Mammary epithelial cell (primary cell): ENCODE measurements at regions of chr1 and their contacts with region 1.

Region 1: GRCh38 chr1:234309598-234310459 is 63.4 kb upstream of the COA6 start:
- DNase-seq: peak; percentile 59
- H3K4me3 ChIP-seq: no peak overlapping the region
- H3K27ac ChIP-seq: no peak overlapping the region
- H3K4me1 ChIP-seq: peaks cover 22% of the 10 kb centered on the region
- H3K27me3 ChIP-seq: no peaks in the 10 kb centered on the region
- CTCF ChIP-seq: peak; percentile 90 to 97

Region 2: DNA sequence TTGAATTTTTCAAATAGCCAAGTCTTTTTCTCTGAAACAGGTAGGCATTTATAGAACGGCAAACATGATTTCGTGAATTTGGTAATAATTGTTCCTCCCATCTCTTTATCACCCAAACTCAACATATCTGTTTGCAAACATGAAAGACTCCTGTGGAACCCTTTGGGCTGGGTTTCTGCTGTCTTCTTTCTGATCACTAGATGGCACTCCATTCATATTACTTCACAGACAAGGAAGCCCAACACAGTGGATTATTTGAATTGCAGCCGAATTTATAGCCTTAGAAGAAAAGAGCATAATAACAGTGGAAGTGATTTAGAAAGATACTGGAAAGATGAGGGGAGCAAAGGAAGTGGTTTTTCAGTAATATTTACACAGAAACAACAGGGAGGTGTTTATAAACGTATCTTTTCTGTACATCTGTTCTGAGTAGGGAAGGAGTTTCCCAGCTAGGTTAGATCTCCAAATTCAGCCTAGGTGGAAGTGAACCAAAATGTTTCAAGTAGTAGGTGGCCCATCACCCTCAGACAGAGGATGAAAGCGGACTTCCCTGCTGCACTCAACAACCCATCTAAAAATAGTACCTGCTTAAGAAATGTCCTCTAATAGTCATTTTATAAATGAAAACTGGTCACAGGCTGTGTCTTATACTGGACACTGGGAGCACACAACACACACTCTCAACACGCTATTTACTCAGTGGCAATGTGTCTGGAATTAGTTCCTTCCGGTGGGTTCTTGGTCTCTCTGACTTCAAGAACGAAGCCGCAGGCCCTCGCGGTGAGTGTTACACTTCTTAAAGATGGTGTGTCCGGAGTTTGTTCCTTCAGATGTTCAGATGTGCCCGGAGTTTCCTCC is 914.7 kb before region 1 on chr1:
- CTCF ChIA-PET with region 1: no interaction called
- dilution Hi-C with region 1: no loop called
- in situ Hi-C with region 1: no loop called
- intact Hi-C with region 1: loop called (anchors 2 kb)
- DNase-seq: peak; percentile 43
- H3K4me3 ChIP-seq: no peak overlapping the region
- H3K27ac ChIP-seq: no peak overlapping the region
- H3K4me1 ChIP-seq: no peaks in the 10 kb centered on the region
- H3K27me3 ChIP-seq: peaks cover 1% of the 10 kb centered on the region
- CTCF ChIP-seq: peak; percentile 83 to 89

Region 3: DNA sequence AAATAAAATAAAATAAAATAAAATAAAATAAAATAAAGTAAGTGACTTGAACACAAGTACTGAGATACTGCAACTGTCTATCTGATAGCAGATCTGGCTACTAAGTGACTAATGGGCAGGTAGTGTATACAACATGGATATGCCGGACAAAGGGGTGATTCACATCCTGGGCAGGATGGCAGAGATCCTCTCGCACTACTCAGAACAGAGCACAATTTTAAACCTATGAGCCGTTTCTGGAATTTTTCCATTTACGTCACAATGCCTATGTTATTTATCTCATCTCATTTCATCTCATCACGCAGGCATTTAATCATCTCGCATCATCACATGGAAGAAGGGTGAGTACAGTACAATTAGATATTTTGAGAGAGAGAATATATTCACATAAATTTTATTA is 169.9 kb before region 1 on chr1:
- CTCF ChIA-PET with region 1: no interaction called
- dilution Hi-C with region 1: loop called (anchors 10 kb)
- in situ Hi-C with region 1: loop called in 1 of 2 experiments (anchors 10 kb)
- intact Hi-C with region 1: no loop called
- DNase-seq: peak; percentile 99
- H3K4me3 ChIP-seq: no peak overlapping the region
- H3K27ac ChIP-seq: peak overlapping the region; percentile 95
- H3K4me1 ChIP-seq: peaks cover 35% of the 10 kb centered on the region
- H3K27me3 ChIP-seq: no peaks in the 10 kb centered on the region
- CTCF ChIP-seq: no peak

Region 4: DNA sequence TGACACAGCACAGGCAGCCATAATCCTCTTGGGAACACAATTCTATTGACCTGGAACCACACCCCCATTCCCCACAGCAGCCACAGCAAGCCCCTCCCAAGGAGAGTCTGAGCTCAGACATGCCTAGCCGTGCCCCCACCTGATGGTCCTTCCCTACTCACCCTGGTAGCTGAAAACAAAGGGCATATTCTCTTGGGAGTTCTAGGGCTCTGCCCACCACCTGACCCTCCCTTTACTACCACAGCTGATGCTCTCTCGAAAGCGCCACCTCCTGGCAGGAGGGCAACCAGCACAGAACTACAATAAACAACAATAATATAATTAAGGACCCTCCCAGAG is 121.4 kb before region 1 on chr1:
- CTCF ChIA-PET with region 1: no interaction called
- dilution Hi-C with region 1: no loop called
- in situ Hi-C with region 1: no loop called
- intact Hi-C with region 1: loop called (anchors 1 kb)
- DNase-seq: peak; percentile 98
- H3K4me3 ChIP-seq: no peak overlapping the region
- H3K27ac ChIP-seq: peak overlapping the region; percentile 75
- H3K4me1 ChIP-seq: peaks cover 38% of the 10 kb centered on the region
- H3K27me3 ChIP-seq: no peaks in the 10 kb centered on the region
- CTCF ChIP-seq: peak; percentile 35 to 48

Region 5: GRCh38 chr1:234373064-234373958 is 63.5 kb after region 1 on chr1 and contains the start of gene COA6:
- CTCF ChIA-PET with region 1: no interaction called
- dilution Hi-C with region 1: no loop called
- in situ Hi-C with region 1: no loop called
- intact Hi-C with region 1: loop called (anchors 5 kb)
- DNase-seq: peak; percentile 96
- H3K4me3 ChIP-seq: peak within 1 kb of the TSS; percentile 74 to 93 (median 91)
- H3K27ac ChIP-seq: peak within 1 kb of the TSS; percentile 88
- H3K4me1 ChIP-seq: peaks cover 14% of the 10 kb centered on the region
- H3K27me3 ChIP-seq: no peaks in the 10 kb centered on the region
- CTCF ChIP-seq: no peak
- total RNA-seq, gene COA6: 10.3 to 43.4 TPM